Dendritic cell treated with granulocyte-macrophage colony-stimulating factor and Interleukin-4, amounts not matched to agents 40 ng/mL and 50 ng/mL, for 4 days (primary cell): ENCODE measurements at regions of chr19 and their contacts with region 1.

Region 1: DNA sequence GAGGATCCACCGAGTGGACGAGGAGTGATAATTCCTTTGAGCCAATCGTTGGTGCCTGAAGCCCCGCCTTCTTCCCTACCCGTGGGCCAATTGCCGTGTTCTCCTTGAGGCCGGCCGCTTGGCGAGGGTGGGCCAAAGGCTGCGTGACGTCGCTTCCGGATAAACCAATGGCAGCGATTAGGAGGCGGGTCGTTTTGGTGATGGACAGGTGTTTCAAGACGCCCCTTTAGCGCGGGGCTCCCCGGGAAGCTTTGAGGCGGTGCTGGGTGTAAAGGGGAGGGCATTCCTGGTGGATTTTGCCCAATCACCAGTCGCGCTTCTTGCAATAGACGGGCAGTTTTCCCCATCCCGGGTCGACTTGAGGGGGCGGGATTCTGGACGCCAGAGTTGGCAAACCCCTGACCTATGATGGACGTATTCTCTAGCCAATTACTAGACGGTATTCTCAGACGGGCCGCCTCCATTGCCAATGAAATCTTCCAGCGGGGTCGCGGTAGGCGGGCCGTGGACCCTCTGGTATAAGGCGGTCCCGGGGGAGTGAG is 310 bp upstream of the PRMT1 start:
- H3K4me3 Mint-ChIP-seq: peak overlapping the region; percentile 92
- H3K27ac Mint-ChIP-seq: peak overlapping the region; percentile 100
- H3K4me1 Mint-ChIP-seq: peaks cover 48% of the 10 kb centered on the region
- H3K27me3 Mint-ChIP-seq: no peaks in the 10 kb centered on the region

Region 2: DNA sequence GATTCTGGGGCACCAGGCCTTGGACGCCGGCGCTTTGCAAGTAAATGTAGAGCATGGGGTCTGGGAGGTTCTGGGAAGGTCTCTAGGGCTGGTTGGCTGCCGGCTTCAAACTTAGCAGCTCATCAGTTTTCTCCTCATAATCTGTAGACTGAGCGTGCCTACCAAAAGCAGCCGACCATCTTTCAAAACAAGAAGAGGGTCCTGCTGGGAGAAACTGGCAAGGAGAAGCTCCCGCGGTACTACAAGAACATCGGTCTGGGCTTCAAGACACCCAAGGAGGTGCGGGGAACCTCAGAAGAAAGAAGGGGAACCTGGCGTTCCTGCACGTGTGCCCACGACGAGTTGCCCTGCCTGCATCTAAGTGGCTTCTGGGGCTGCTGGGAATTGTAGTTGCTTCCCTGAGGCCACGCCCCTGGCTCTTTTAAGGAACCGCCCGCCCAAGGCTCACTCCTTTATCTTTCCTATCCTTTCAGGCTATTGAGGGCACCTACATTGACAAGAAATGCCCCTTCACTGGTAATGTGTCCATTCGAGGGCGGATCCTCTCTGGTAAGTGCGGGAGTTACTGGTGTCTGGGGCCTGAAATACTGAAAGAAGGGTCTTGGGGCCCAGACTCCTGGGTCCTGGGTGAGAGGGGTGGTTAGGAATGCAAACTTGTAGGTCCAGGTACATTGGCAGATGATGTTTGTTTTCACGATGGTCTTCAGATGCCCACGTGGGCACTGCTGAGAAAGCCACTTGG is 179.5 kb before region 1 on chr19:
- intact Hi-C with region 1: loop called (anchors 5 kb)
- H3K4me3 Mint-ChIP-seq: peak overlapping the region; percentile 99
- H3K27ac Mint-ChIP-seq: peak overlapping the region; percentile 99
- H3K4me1 Mint-ChIP-seq: peaks cover 34% of the 10 kb centered on the region
- H3K27me3 Mint-ChIP-seq: peaks cover 3% of the 10 kb centered on the region

Region 3: GRCh38 chr19:49590071-49590970 is 86.4 kb before region 1 on chr19:
- intact Hi-C with region 1: loop called (anchors 2 kb)
- H3K4me3 Mint-ChIP-seq: peak overlapping the region; percentile 84
- H3K27ac Mint-ChIP-seq: peak overlapping the region; percentile 82
- H3K4me1 Mint-ChIP-seq: peaks cover 42% of the 10 kb centered on the region
- H3K27me3 Mint-ChIP-seq: peaks cover 3% of the 10 kb centered on the region

Region 4: GRCh38 chr19:49646486-49646985 is 30.2 kb before region 1 on chr19:
- intact Hi-C with region 1: no loop called
- H3K4me3 Mint-ChIP-seq: no peak overlapping the region
- H3K27ac Mint-ChIP-seq: no peak overlapping the region
- H3K4me1 Mint-ChIP-seq: peaks cover 33% of the 10 kb centered on the region
- H3K27me3 Mint-ChIP-seq: no peaks in the 10 kb centered on the region

Region 5: GRCh38 chr19:49665351-49666119 is 11.2 kb before region 1 on chr19 and contains the starts of genes BCL2L12 and IRF3:
- intact Hi-C with region 1: loop called (anchors 1 kb)
- H3K4me3 Mint-ChIP-seq: peak within 1 kb of the TSS; percentile 99
- H3K27ac Mint-ChIP-seq: peak within 1 kb of the TSS; percentile 96
- H3K4me1 Mint-ChIP-seq: peaks cover 47% of the 10 kb centered on the region
- H3K27me3 Mint-ChIP-seq: no peaks in the 10 kb centered on the region